Endothelial cell of umbilical vein (primary cell): ENCODE measurements at regions of chr5 and their contacts with region 1.

Region 1: GRCh38 chr5:6096101-6096500 is 282.2 kb downstream of the MED10 start:
- DNase-seq: no peak
- H3K4me3 ChIP-seq: no peak overlapping the region
- H3K27ac ChIP-seq: no peak overlapping the region
- H3K4me1 ChIP-seq: no peaks in the 10 kb centered on the region
- H3K27me3 ChIP-seq: no peaks in the 10 kb centered on the region
- CTCF ChIP-seq: no peak
- POLR2A ChIP-seq: no peak

Region 2: DNA sequence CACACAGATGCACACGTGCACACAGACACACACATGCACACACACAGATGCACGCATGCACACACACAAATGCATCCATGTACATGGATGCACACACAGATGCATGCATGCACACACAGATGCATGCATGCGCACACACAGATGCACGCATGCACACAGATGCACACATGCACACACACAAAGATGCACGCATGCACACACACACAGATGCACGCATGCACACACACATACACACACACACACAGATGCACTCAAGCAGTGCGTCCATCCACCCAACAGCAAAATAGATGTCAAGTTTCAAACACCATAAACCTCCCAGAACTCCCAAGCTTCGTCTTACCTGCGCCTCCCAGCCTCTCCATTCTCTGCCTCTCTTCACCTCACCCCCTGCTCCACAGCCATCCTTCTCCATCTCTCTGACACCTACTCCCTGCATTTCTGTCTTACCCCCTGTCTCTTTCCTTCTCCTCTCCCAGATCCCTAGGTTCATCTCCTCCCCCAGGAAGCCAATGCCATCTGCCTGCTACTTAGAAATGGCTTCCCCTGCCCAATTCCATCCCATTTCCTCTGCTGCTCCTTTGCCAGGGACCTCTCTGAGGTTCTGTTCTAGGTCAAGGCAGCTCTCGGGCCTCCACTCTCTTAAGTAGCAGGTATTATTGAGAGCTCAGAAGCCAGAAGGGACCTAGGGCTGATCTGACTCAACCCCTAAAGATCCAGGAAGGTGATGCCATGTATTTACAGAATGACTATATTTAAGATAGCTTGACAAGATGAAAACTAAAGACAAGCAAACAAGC is 15.0 kb before region 1 on chr5:
- CTCF ChIA-PET with region 1: no interaction called
- POLR2A ChIA-PET with region 1: no interaction called
- dilution Hi-C with region 1: no loop called
- intact Hi-C with region 1: loop called (anchors 1 kb)
- DNase-seq: no peak
- H3K4me3 ChIP-seq: no peak overlapping the region
- H3K27ac ChIP-seq: no peak overlapping the region
- H3K4me1 ChIP-seq: no peaks in the 10 kb centered on the region
- H3K27me3 ChIP-seq: no peaks in the 10 kb centered on the region
- CTCF ChIP-seq: no peak
- POLR2A ChIP-seq: no peak

Region 3: DNA sequence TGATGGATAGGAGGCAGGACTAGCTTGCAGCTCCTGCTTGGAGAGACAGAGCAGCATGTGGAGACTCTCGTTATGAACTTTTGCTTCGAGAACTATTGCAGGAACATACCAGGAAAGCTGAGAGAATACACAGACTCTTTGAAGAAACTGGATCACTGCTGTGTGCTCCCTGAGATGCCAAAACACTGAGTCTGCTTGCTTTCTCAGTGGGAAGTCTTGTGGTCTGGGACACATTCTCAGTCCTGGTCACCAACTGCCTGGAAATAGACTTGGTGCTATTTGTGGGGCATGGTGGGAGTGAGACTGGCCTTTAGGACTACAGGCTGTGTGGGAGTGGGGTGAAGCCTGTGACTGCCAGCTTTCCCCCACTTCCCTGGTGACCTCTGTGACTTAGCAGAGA is 29.7 kb after region 1 on chr5:
- CTCF ChIA-PET with region 1: no interaction called
- POLR2A ChIA-PET with region 1: no interaction called
- dilution Hi-C with region 1: no loop called
- intact Hi-C with region 1: no loop called
- DNase-seq: no peak
- H3K4me3 ChIP-seq: no peak overlapping the region
- H3K27ac ChIP-seq: no peak overlapping the region
- H3K4me1 ChIP-seq: no peaks in the 10 kb centered on the region
- H3K27me3 ChIP-seq: no peaks in the 10 kb centered on the region
- CTCF ChIP-seq: no peak
- POLR2A ChIP-seq: no peak

Region 4: DNA sequence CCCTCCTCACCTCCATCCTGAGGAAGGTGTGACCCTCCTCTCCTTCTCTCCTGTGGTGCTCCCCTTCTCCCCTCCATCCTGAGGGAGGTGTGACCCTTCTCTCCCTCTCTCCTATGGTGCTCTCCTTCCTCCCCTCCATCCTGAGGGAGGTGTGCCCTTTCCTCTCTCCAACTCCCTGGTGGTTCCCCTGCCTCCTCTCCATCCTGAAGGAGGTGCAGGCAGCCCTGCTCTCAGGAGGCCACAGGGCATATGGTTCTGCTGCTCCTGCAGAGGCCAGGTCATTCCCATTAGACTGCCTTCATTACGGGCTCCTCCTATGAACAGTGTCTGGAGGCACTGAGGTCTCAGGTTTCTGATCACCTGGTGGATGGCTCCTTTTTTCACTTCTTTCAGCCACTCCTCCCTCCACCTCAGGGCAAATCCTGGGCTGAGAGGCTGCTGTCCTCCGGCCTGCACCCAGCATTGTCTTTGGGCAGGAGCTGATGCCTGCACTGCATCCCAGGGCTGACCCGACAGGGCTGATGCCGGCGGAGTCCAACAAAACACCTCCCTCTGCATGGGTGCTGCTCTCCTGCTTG is 85.1 kb after region 1 on chr5:
- CTCF ChIA-PET with region 1: no interaction called
- POLR2A ChIA-PET with region 1: no interaction called
- dilution Hi-C with region 1: no loop called
- intact Hi-C with region 1: no loop called
- DNase-seq: no peak
- H3K4me3 ChIP-seq: no peak overlapping the region
- H3K27ac ChIP-seq: no peak overlapping the region
- H3K4me1 ChIP-seq: no peaks in the 10 kb centered on the region
- H3K27me3 ChIP-seq: no peaks in the 10 kb centered on the region
- CTCF ChIP-seq: no peak
- POLR2A ChIP-seq: no peak